ENCODE measurements at regions of chr11 and their contacts with region 1.

Region 1: GRCh38 chr11:4862447-4863236 is 13.6 kb upstream of the OR51S1 start:
- DNase-seq: no peak
- H3K4me3 ChIP-seq: no peak overlapping the region
- H3K27ac ChIP-seq: no peak overlapping the region
- H3K4me1 ChIP-seq: peaks cover 7% of the 10 kb centered on the region
- H3K27me3 ChIP-seq: no peaks in the 10 kb centered on the region
- CTCF ChIP-seq: no peak

Region 2: DNA sequence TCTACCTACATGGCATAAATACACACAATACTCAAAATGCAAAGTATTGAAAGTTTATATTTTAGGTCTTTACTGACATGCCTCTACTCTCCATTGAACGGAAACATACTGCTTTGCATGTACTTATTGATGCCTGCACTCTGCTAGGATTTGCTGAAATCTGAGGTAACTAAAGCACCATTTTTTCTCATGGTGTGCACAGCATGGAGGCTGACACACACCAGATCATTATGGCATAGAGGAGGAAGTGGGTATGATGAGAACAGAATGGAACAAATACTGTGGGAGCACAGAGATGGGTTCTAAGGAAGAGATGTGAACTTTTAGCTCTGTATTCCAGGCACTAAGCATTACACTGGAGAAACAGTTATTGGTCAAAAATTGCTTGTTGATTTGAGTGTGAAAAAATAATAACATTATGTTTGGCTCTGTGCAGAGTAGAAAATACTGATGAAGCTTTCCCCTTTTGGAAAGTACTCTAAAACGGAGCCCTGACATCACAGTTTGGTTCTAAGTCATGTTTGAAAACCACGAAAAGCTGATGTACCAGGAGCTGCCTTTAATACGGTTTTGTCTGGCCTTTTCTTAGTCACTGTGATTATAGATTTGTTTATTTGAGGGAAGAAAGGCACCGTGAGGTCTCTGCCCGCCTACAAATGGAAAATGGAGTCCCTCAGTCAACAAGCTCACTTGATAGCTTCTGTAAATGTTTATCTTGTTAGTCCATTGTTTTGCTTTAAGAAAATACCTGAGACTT is 64.0 kb before region 1 on chr11:
- intact Hi-C with region 1: no loop called
- DNase-seq: no peak
- H3K4me3 ChIP-seq: no peak overlapping the region
- H3K27ac ChIP-seq: no peak overlapping the region
- H3K4me1 ChIP-seq: no peaks in the 10 kb centered on the region
- H3K27me3 ChIP-seq: no peaks in the 10 kb centered on the region
- CTCF ChIP-seq: no peak

Region 3: DNA sequence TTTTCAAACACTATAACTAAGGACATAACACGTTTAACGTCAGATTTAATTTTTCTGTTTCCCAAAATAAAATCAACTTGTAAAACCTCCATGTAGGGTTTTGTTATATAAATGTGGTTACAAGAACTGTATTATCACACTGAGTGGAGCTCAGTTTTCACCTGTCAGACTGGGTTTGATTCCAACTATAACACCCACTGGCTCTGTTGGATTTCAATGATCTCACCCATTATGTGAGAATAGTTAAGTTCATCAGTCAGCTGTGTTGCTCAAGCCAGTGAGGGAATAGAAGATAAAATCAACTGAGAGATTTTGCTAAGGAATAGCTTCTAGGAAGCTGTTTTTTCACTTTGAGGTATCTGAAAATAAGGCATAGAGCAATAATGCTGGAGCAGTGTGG is 53.4 kb before region 1 on chr11:
- intact Hi-C with region 1: no loop called
- DNase-seq: no peak
- H3K4me3 ChIP-seq: no peak overlapping the region
- H3K27ac ChIP-seq: no peak overlapping the region
- H3K4me1 ChIP-seq: no peaks in the 10 kb centered on the region
- H3K27me3 ChIP-seq: no peaks in the 10 kb centered on the region
- CTCF ChIP-seq: no peak

Region 4: DNA sequence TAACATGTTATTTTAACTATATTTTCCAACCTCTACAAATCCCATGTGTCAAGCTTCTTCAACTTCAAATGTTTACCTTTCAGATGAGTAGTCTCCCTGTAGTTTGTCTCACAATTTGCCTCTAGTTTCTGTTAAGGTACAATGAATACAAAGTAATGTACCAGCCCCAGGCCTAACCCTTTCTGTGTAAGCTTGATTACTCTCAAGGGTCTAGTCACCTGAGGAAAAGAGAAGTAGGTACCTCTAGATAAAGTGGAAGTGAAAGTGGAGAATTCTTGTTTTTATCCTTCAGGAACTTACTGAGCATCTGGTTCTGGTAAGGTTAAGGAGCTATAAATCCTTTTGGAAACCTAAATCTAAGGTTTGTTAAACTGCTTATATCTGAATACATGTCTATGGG is 40.8 kb after region 1 on chr11 and contains the start of gene OR51A7:
- intact Hi-C with region 1: loop called (anchors 2 kb)
- DNase-seq: no peak
- H3K4me3 ChIP-seq: no peak within 1 kb of the TSS
- H3K27ac ChIP-seq: no peak within 1 kb of the TSS
- H3K4me1 ChIP-seq: no peaks in the 10 kb centered on the region
- H3K27me3 ChIP-seq: no peaks in the 10 kb centered on the region
- CTCF ChIP-seq: no peak
- total RNA-seq, gene OR51A7: not detected

Measured in left ventricle myocardium inferior (tissue), 1 donor.